ENCODE measurements at regions of chr11 and their contacts with region 1.

Region 1: GRCh38 chr11:111918390-111919258 is at the start of gene C11orf52:
- DNase-seq: no peak
- H3K4me3 ChIP-seq: no peak within 1 kb of the TSS
- H3K27ac ChIP-seq: no peak within 1 kb of the TSS
- H3K4me1 ChIP-seq: no peaks in the 10 kb centered on the region
- CTCF ChIP-seq: no peak
- total RNA-seq, gene C11orf52: not detected in 2 replicates

Region 2: GRCh38 chr11:112033156-112033555 is 114.5 kb after region 1 on chr11:
- CTCF ChIA-PET with region 1: no interaction called
- POLR2A ChIA-PET with region 1: interaction called, 12 read pairs
- intact Hi-C with region 1: no loop called
- DNase-seq: no peak
- H3K4me3 ChIP-seq: no peak overlapping the region
- H3K27ac ChIP-seq: no peak overlapping the region
- H3K4me1 ChIP-seq: no peaks in the 10 kb centered on the region
- CTCF ChIP-seq: no peak

Measured in OCI-LY7 (cell line).